Activated CD8-positive, alpha-beta T cell treated with anti-CD3 and anti-CD28 coated beads, Interleukin-2, amount 10 ng/mL, durations not matched to agents 7 days and 5 days (primary cell): ENCODE measurements at regions of chr6 and their contacts with region 1.

Region 1: GRCh38 chr6:118893807-118894424 is at the start of gene ASF1A:
- DNase-seq: peak; percentile 97
- ATAC-seq: peak; percentile 82
- H3K4me3 Mint-ChIP-seq: peak within 1 kb of the TSS; percentile 88
- H3K27ac Mint-ChIP-seq: peak within 1 kb of the TSS; percentile 96
- H3K4me1 Mint-ChIP-seq: peaks cover 51% of the 10 kb centered on the region
- H3K27me3 Mint-ChIP-seq: no peaks in the 10 kb centered on the region
- total RNA-seq, gene ASF1A: 49.4 to 51.1 TPM

Region 2: DNA sequence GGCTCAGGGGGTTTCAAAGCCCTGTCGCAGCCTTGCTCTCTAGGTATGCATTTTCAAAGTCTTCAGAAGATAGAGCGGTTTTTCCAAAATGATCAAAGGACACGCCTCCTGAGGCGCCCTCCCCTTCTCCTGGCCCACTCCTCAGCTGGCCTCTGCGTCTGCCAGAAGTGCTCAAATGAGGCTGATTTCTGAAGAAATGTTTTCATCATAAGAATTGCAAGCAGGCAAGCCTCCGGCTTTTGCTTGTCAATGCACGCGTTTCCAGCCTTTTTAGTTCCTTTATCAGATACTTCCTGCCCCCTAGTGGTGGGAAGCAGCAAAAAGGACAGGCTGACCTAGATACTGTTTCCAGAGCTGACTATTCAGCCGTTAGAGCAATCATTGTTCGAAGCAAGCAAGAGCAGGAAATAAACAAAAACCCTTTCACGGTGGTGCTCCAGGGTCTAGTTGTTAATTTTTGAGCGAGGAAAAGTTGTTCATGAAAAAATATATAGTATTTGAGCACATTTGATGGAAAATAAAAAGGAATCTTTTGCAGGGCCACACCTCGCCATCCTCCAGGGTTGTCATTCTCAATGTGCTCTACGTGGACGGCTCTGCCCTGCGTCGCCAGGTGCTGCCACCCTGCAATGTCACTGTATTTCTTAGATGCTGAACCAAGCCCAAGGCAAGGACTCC is 93.4 kb before region 1 on chr6:
- CTCF ChIA-PET with region 1: interaction called, 26 read pairs
- POLR2A ChIA-PET with region 1: interaction called, 21 read pairs
- DNase-seq: peak; percentile 92
- ATAC-seq: peak; percentile 95
- H3K4me3 Mint-ChIP-seq: peak overlapping the region; percentile 45
- H3K27ac Mint-ChIP-seq: peak overlapping the region; percentile 81
- H3K4me1 Mint-ChIP-seq: peaks cover 40% of the 10 kb centered on the region
- H3K27me3 Mint-ChIP-seq: no peaks in the 10 kb centered on the region

Region 3: DNA sequence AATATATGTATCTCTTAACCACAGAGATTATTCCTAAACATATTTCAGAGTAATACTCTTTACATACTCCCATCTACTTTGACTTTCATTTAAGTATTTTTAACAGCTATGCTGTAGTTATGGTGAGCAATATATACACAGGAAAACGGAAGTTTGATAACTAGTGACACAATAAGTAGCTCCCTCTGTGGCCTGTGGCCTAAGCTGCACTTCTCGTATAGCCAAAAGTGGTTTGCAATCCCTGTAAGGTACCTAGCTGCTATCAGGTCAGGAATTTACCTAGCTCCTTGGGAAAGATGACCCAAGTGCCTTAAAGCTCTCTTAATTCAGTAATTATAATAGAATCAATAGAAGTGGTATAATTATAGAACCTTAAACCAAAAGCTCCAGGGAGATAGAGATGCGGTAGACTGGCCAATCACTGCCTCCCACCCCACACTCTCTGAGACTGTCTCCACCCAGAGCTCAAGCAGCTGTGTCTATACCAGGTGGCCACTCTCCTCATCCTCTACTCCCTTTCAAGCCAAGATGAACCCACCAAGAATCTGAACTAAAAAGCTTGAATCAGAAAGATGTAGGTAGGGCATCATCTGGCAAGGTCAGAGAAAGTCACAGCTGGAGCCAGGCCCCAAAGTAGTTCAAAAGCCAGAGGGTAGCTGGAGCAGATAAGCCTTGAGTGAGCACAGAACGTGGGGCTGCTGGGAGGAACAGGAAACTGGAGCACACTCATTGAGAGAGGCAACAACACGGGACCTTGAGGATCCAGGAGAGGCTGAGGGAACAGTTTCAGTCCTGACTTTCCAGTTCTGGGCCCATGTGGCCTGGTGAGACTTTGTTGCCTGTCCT is 84.9 kb before region 1 on chr6:
- CTCF ChIA-PET with region 1: interaction called, 20 read pairs
- POLR2A ChIA-PET with region 1: interaction called, 17 read pairs
- DNase-seq: peak; percentile 54
- ATAC-seq: peak; percentile 51
- H3K4me3 Mint-ChIP-seq: no peak overlapping the region
- H3K27ac Mint-ChIP-seq: peak overlapping the region; percentile 92
- H3K4me1 Mint-ChIP-seq: peaks cover 50% of the 10 kb centered on the region
- H3K27me3 Mint-ChIP-seq: no peaks in the 10 kb centered on the region

Region 4: GRCh38 chr6:118934461-118935330 is 40.8 kb after region 1 on chr6 and contains the start of gene MCM9:
- CTCF ChIA-PET with region 1: interaction called, 4 read pairs
- POLR2A ChIA-PET with region 1: interaction called, 25 read pairs
- DNase-seq: peak; percentile 88
- ATAC-seq: peak; percentile 97
- H3K4me3 Mint-ChIP-seq: peak within 1 kb of the TSS; percentile 88
- H3K27ac Mint-ChIP-seq: peak within 1 kb of the TSS; percentile 90
- H3K4me1 Mint-ChIP-seq: peaks cover 24% of the 10 kb centered on the region
- H3K27me3 Mint-ChIP-seq: no peaks in the 10 kb centered on the region
- total RNA-seq, gene MCM9: 18.1 to 18.8 TPM

Region 5: DNA sequence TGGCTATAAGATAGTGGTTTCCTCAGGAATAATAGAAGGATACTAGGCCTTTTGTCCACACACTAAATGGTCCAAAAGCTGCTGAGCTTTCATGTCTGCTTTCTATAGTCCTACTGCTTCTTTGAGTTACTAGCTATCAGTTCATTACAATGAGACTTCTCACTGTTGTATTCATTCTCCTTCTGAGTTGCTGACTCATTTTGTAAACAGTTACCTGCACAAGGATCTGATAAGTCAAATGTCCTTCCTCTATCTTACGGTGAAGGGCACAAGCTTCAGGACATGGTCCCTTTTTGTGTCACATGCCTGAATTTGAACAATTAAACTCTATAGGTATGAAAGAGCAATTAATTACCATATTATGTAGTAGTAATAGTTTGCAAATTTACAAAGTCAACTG is 365.1 kb after region 1 on chr6:
- CTCF ChIA-PET with region 1: no interaction called
- POLR2A ChIA-PET with region 1: no interaction called
- DNase-seq: no peak
- ATAC-seq: no peak
- H3K4me3 Mint-ChIP-seq: no peak overlapping the region
- H3K27ac Mint-ChIP-seq: no peak overlapping the region
- H3K4me1 Mint-ChIP-seq: peaks cover 25% of the 10 kb centered on the region
- H3K27me3 Mint-ChIP-seq: no peaks in the 10 kb centered on the region